ENCODE measurements at regions of chr16 and their contacts with region 1.

Region 1: GRCh38 chr16:483341-484075 is 44.0 kb upstream of the CAPN15 start:
- DNase-seq: no peak
- H3K4me3 ChIP-seq: no peak overlapping the region
- H3K4me3 Mint-ChIP-seq: no peak overlapping the region
- H3K27ac ChIP-seq: no peak overlapping the region
- H3K27ac Mint-ChIP-seq: peak overlapping the region in 1 of 7 donors; percentile 21
- H3K4me1 ChIP-seq: no peaks in the 10 kb centered on the region
- H3K4me1 Mint-ChIP-seq: no peaks in the 10 kb centered on the region
- H3K27me3 ChIP-seq: no peaks in the 10 kb centered on the region
- H3K27me3 Mint-ChIP-seq: no peaks in the 10 kb centered on the region
- CTCF ChIP-seq: no peak

Region 2: DNA sequence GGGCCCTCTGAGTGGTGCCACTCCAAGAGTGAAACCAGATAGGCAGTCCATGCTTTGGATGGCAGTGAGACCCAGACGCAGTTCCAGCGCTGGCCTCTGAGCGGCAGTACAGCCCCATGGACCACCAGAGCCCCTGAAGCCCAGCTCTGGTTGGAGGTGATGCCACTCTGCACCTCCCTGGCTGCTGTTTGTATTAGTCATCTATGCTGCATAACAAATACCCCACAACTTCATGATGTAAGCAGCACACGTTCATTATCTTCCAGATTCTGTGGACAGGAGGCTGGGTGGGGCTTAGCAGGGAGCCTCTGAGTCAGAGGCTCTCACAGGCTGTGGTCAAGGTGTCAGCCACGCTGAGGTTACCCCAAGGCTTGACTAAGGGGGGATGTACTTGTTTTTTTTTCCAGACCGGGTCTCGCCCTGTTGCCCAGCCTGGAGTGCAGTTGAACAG is 91.6 kb before region 1 on chr16:
- intact Hi-C with region 1: loop called in 1 of 2 experiments (anchors 2 kb)
- DNase-seq: peak; percentile 57 to 80 (median 58)
- H3K4me3 ChIP-seq: no peak overlapping the region
- H3K4me3 Mint-ChIP-seq: no peak overlapping the region
- H3K27ac ChIP-seq: no peak overlapping the region
- H3K27ac Mint-ChIP-seq: peak overlapping the region in 1 of 7 donors; percentile 53
- H3K4me1 ChIP-seq: peaks cover 16 to 17% of the 10 kb centered on the region in 2 donors
- H3K4me1 Mint-ChIP-seq: peaks cover 15% of the 10 kb centered on the region
- H3K27me3 ChIP-seq: no peaks in the 10 kb centered on the region
- H3K27me3 Mint-ChIP-seq: peaks cover 3 to 8% (median 4%) of the 10 kb centered on the region in 3 donors
- CTCF ChIP-seq: peak; percentile 68

Region 3: GRCh38 chr16:521381-522210 is 38.1 kb after region 1 on chr16:
- intact Hi-C with region 1: no loop called
- DNase-seq: no peak
- H3K4me3 ChIP-seq: no peak overlapping the region
- H3K4me3 Mint-ChIP-seq: no peak overlapping the region
- H3K27ac ChIP-seq: no peak overlapping the region
- H3K27ac Mint-ChIP-seq: peak overlapping the region in 1 of 7 donors; percentile 53
- H3K4me1 ChIP-seq: peaks cover 9 to 17% of the 10 kb centered on the region in 2 donors
- H3K4me1 Mint-ChIP-seq: peaks cover 16% of the 10 kb centered on the region
- H3K27me3 ChIP-seq: no peaks in the 10 kb centered on the region
- H3K27me3 Mint-ChIP-seq: peaks cover 0 to 2% (median 0%) of the 10 kb centered on the region in 3 donors
- CTCF ChIP-seq: no peak

Region 4: DNA sequence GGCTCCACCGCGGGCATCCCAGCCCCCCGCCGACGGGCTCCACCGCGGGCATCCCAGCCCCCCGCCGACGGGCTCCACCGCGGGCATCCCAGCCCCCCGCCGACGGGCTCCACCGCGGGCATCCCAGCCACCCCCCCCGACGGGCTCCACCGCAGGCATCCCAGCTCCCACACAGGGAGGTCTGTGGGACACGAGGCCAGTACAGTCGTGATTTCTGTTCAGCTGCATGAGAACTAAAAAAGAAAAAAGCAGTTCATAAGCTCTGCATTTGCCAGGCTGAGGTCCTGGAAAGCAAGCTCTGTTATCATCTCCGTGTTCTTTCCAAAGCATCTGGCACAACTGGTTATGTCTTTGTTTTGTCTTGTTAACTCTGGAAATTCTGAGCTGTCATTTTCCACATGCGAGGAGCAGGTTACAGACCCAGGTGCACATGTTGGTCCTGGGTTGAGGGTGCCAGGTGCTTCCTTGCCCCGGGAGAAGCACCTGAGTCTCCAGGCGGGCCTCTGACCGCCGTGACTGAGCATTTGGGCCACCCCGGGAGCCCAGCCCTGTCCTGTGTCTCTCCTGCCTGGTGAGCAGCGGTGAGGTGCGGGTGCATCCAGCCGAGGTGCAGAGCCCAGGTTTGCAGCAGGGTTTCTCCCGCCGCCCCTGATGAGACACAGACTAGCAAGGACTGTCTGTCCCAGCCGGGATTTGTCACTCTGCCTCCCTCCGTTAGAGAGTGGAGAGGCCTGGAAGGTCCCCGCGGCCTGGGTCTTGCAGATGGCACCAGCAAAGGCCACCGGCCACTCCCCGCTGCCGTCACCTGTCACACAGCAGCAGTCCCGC is 137.4 kb after region 1 on chr16:
- intact Hi-C with region 1: no loop called
- DNase-seq: no peak
- H3K4me3 ChIP-seq: no peak overlapping the region
- H3K4me3 Mint-ChIP-seq: no peak overlapping the region
- H3K27ac ChIP-seq: no peak overlapping the region
- H3K27ac Mint-ChIP-seq: no peak overlapping the region
- H3K4me1 ChIP-seq: no peaks in the 10 kb centered on the region
- H3K4me1 Mint-ChIP-seq: no peaks in the 10 kb centered on the region
- H3K27me3 ChIP-seq: no peaks in the 10 kb centered on the region
- H3K27me3 Mint-ChIP-seq: peaks cover 0 to 1% (median 0%) of the 10 kb centered on the region in 3 donors
- CTCF ChIP-seq: no peak